B cell (primary cell): ENCODE measurements at regions of chr9 and their contacts with region 1.

Region 1: DNA sequence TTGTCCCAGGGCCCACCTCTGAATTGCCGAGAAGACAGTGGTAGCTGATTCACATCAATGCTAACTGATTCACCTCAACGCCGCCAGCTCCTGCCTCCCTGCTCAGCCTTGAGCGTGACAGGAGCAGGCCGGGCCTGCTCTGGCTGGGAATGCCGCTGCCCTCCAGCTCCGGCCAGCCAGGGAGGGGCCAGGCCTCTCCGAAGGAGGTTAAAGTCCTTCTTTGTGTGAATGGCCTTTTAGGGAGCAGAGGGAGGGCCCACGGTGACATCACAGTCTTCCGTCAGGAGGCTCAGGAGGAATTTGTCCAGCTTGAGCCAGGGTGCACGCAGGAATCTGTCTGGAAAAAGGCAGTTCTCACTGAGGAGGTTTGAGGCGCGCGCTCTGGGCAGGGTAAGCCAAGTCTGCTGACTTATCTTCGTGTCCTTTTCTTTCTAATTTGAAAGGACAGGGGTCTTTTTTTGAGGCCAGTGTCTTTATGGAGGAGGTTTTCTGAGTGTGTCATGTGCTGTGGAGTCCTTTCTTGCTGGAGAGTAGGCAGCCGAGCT is 82.7 kb downstream of the C9orf152 start:
- DNase-seq: no peak
- ATAC-seq: no peak
- H3K4me3 ChIP-seq: no peak overlapping the region
- H3K4me3 Mint-ChIP-seq: peak overlapping the region; percentile 71
- H3K27ac ChIP-seq: peak overlapping the region; percentile 90 to 94
- H3K27ac Mint-ChIP-seq: peak overlapping the region; percentile 89
- H3K4me1 ChIP-seq: peaks cover 84 to 92% of the 10 kb centered on the region in 2 donors
- H3K4me1 Mint-ChIP-seq: peaks cover 97% of the 10 kb centered on the region
- H3K27me3 ChIP-seq: no peaks in the 10 kb centered on the region
- H3K27me3 Mint-ChIP-seq: no peaks in the 10 kb centered on the region
- CTCF ChIP-seq: no peak

Region 2: GRCh38 chr9:109627041-109627440 is 498.2 kb before region 1 on chr9:
- CTCF ChIA-PET with region 1: no interaction called
- POLR2A ChIA-PET with region 1: no interaction called
- intact Hi-C with region 1: no loop called
- DNase-seq: no peak
- ATAC-seq: no peak
- H3K4me3 ChIP-seq: no peak overlapping the region
- H3K4me3 Mint-ChIP-seq: no peak overlapping the region
- H3K27ac ChIP-seq: no peak overlapping the region
- H3K27ac Mint-ChIP-seq: no peak overlapping the region
- H3K4me1 ChIP-seq: no peaks in the 10 kb centered on the region
- H3K4me1 Mint-ChIP-seq: no peaks in the 10 kb centered on the region
- H3K27me3 ChIP-seq: peaks cover 0 to 8% (median 1%) of the 10 kb centered on the region in 4 experiments
- H3K27me3 Mint-ChIP-seq: peaks cover 26% of the 10 kb centered on the region
- CTCF ChIP-seq: no peak

Region 3: GRCh38 chr9:109918339-109919163 is 206.7 kb before region 1 on chr9:
- CTCF ChIA-PET with region 1: no interaction called
- POLR2A ChIA-PET with region 1: no interaction called
- intact Hi-C with region 1: loop called (anchors 5 kb)
- DNase-seq: peak; percentile 75
- ATAC-seq: peak; percentile 71
- H3K4me3 ChIP-seq: peak overlapping the region; percentile 4 to 38 (median 30)
- H3K4me3 Mint-ChIP-seq: peak overlapping the region; percentile 79
- H3K27ac ChIP-seq: peak overlapping the region; percentile 97
- H3K27ac Mint-ChIP-seq: peak overlapping the region; percentile 96
- H3K4me1 ChIP-seq: peaks cover 87 to 90% of the 10 kb centered on the region in 2 donors
- H3K4me1 Mint-ChIP-seq: peaks cover 83% of the 10 kb centered on the region
- H3K27me3 ChIP-seq: no peaks in the 10 kb centered on the region
- H3K27me3 Mint-ChIP-seq: no peaks in the 10 kb centered on the region
- CTCF ChIP-seq: no peak

Region 4: DNA sequence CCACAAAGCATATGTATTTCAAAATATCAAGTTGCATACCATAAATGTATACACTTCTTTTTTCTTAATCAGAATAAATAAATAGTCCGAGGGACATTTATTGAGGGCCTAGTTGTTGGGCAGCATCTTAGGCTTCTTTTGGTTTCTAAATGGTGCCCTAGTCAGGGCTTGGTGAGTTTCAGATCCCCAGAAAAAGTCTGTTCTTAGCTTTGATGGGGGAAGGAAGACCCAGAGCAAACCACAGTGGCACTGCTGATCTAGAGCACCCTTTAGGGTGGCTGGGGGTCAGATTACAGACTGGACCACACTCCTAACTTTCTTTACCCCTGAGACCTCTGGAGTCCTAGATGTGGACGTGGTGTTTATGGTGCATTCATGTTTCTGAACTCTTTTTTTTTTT is 15.1 kb before region 1 on chr9:
- CTCF ChIA-PET with region 1: interaction called, 5 read pairs
- POLR2A ChIA-PET with region 1: interaction called, 5 read pairs
- intact Hi-C with region 1: loop called (anchors 2 kb)
- DNase-seq: peak; percentile 61
- ATAC-seq: peak; percentile 70
- H3K4me3 ChIP-seq: no peak overlapping the region
- H3K4me3 Mint-ChIP-seq: peak overlapping the region; percentile 52
- H3K27ac ChIP-seq: peak overlapping the region; percentile 38 to 84
- H3K27ac Mint-ChIP-seq: peak overlapping the region; percentile 74
- H3K4me1 ChIP-seq: peaks cover 73 to 82% of the 10 kb centered on the region in 2 donors
- H3K4me1 Mint-ChIP-seq: peaks cover 73% of the 10 kb centered on the region
- H3K27me3 ChIP-seq: no peaks in the 10 kb centered on the region
- H3K27me3 Mint-ChIP-seq: no peaks in the 10 kb centered on the region
- CTCF ChIP-seq: no peak

Region 5: DNA sequence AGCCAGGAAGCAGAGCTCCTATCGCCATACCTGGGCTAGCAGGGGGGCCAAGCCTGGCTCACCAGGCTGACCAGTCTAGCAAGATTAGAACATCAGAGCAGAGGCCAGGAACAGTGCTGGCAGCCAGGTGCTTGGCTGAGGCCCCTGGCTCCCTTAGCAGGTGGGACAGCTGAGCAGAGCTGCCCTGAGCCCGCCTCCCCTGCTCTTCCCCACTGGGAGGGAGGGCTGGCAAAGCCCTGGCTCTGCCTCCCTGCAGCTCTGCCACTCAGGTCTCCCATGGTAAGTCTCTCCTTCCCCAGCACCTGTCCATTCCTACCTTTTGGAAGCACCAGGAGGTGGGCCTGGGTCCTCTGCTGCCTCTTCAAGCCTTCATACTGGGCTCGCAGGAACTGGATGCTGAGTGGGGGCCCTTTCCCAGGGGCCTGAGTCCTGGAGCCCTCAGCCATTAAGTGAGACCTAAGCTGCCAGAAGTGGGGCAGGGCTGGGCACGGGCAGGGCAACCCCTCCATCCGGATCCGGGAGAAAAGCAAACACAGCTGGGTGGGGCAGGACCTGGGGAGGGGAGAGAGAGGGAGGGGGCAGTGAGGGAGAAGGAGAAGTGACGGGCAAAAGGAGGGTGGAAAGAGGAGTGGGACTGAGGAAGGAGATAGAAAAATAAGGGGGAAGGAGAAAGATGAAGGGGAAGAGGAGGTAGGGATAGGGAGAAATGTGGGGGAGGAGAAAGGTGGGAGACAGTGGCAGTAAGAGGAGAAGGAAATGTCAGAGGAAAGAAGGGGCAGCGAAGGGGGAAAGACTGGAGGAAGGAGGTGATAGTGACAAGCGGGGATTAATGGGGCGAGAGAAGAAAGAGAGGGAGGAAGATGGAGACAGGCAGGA is 82.0 kb after region 1 on chr9:
- CTCF ChIA-PET with region 1: no interaction called
- POLR2A ChIA-PET with region 1: no interaction called
- intact Hi-C with region 1: no loop called
- DNase-seq: no peak
- ATAC-seq: no peak
- H3K4me3 ChIP-seq: no peak overlapping the region
- H3K4me3 Mint-ChIP-seq: no peak overlapping the region
- H3K27ac ChIP-seq: no peak overlapping the region
- H3K27ac Mint-ChIP-seq: no peak overlapping the region
- H3K4me1 ChIP-seq: no peaks in the 10 kb centered on the region
- H3K4me1 Mint-ChIP-seq: no peaks in the 10 kb centered on the region
- H3K27me3 ChIP-seq: peaks cover 0 to 4% (median 0%) of the 10 kb centered on the region in 4 experiments
- H3K27me3 Mint-ChIP-seq: peaks cover 3% of the 10 kb centered on the region
- CTCF ChIP-seq: no peak